Ascending aorta (tissue), 2 donors: ENCODE measurements at regions of chr2 and their contacts with region 1.

Region 1: GRCh38 chr2:162301151-162301804 is 17.2 kb downstream of the IFIH1 start:
- DNase-seq: no peak
- H3K4me3 ChIP-seq: no peak overlapping the region
- H3K27ac ChIP-seq: no peak overlapping the region
- H3K4me1 ChIP-seq: no peaks in the 10 kb centered on the region
- H3K27me3 ChIP-seq: no peaks in the 10 kb centered on the region
- CTCF ChIP-seq: peak; percentile 54 to 92 (median 86)

Region 2: DNA sequence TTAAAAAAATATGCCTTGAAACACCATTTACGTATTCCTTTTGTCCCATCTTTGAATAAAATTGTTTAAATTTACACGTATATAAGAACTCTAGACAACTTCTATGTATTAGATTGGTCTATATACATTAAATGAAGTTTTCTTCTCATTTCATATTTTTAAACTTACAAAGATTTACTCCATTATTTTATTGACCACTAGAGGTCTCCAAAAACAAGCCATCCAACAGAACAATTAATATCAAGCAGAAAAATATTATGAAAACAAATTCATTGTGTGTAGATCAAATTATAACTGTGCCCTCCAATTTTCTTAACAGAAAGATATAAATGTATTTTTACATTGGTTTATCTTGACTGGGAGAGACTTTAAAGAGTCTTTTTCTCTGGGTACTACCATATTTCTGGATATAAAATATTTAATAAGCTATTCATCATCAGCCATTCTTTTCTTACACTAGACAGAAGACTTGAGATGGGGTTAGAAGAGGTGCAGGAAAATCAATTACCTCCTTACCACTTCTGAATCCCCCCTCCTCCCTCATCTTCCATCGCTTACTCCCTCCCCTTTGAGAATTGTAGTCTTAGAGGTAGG is 293.7 kb before region 1 on chr2:
- intact Hi-C with region 1: loop called (anchors 10 kb)
- DNase-seq: no peak
- H3K4me3 ChIP-seq: no peak overlapping the region
- H3K27ac ChIP-seq: no peak overlapping the region
- H3K4me1 ChIP-seq: no peaks in the 10 kb centered on the region
- H3K27me3 ChIP-seq: no peaks in the 10 kb centered on the region
- CTCF ChIP-seq: peak; percentile 25 to 60 (median 43)

Region 3: GRCh38 chr2:162126111-162126519 is 175.2 kb before region 1 on chr2:
- intact Hi-C with region 1: no loop called
- DNase-seq: no peak
- H3K4me3 ChIP-seq: no peak overlapping the region
- H3K27ac ChIP-seq: no peak overlapping the region
- H3K4me1 ChIP-seq: no peaks in the 10 kb centered on the region
- H3K27me3 ChIP-seq: no peaks in the 10 kb centered on the region
- CTCF ChIP-seq: no peak

Region 4: DNA sequence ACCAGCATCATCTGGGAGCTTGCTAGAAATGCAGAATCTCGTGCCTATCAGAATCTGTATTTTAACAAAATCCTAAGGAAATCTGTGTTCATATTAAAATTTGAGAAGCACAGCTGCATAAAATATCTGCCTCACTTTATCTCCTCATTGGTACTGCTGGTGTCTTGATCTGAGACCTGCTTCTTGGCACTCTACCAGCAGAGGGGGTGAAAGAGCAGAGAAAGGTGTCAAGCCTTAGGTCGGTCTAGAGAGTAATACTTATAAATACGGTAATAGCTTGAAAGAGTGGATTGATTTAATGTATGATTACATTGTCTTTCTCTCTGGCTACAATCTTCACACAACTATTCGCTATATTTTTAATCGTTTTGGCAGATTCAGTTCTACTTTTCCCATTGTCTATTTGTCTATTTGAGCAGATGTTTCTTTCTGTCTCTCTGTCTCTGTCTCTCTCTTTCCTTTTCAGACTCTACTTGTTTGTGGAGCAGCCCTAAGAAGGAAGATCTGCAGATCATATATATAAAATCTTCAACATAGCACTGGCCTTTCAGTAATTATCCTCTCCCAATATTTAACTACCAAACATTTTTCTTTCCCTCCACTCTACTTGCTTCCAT is 147.6 kb before region 1 on chr2:
- intact Hi-C with region 1: loop called (anchors 5 kb)
- DNase-seq: no peak
- H3K4me3 ChIP-seq: no peak overlapping the region
- H3K27ac ChIP-seq: no peak overlapping the region
- H3K4me1 ChIP-seq: no peaks in the 10 kb centered on the region
- H3K27me3 ChIP-seq: no peaks in the 10 kb centered on the region
- CTCF ChIP-seq: peak in 1 of 3 experiments; percentile 20

Region 5: DNA sequence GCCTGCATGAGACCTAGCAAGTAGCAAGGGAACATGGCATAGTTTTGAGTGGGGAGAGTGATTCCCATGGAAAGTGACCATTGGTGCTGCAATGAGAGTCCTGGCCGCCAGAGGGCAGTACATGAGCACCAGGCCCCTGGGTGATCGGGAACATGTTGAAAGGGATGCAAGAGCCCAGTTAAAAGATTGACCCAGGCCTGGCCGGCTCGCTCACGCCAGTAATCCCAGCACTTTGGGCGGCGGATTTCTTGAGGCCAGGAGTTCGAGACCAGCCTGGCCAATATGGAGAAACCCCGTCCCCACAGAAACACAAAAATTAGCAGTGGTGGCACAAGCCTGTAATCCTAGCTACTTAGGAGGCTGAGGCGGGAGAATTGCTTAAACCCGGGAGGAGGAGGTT is 80.2 kb before region 1 on chr2:
- intact Hi-C with region 1: loop called (anchors 1 kb)
- DNase-seq: peak; percentile 28 to 88
- H3K4me3 ChIP-seq: no peak overlapping the region
- H3K27ac ChIP-seq: no peak overlapping the region
- H3K4me1 ChIP-seq: no peaks in the 10 kb centered on the region
- H3K27me3 ChIP-seq: no peaks in the 10 kb centered on the region
- CTCF ChIP-seq: peak; percentile 74 to 88 (median 85)

Region 6: DNA sequence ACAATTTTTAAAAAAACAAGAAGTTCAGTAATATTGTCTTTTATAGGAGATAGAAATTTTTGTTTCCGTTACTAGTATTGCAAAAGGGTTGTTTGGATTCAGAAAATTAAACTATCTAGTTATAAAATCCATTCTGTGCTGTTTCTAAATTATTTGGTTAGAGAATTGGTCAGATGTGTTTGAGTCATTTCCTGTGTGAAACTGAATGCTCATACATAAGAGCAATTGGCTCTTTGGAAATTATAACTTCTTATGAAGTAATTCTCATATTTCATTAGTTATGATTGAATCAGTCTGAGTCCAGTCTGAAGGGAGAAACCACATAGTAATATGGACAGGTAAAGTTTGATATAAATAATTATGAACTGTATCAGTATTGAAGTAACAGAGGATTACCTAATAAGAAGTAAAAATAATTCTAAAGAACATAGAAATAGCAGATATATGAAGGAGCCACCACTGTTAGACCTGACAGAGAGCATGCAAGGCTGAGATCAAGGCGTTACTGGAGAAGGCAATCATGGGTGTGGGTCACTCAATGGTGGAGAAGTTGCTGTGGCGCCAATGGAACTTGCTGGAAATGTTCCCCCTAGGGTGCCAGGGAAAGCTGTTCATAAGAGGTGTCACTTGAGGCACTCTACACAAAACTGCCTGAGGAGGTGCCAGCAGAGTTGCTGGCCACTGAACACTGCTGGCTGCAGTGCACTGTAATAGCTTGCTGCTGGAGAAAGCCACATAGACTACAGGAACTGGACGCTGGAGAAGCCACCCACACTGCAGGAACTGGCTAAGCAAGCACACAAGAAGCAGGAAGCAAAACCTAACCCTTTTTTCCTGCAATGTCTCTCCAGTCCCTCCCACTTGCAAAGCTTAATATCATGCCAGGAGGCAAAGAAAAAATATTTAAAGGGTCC is 40.0 kb before region 1 on chr2:
- intact Hi-C with region 1: loop called (anchors 5 kb)
- DNase-seq: peak; percentile 39 to 75
- H3K4me3 ChIP-seq: no peak overlapping the region
- H3K27ac ChIP-seq: peak overlapping the region; percentile 62 to 63
- H3K4me1 ChIP-seq: peaks cover 0 to 8% of the 10 kb centered on the region in 2 donors
- H3K27me3 ChIP-seq: no peaks in the 10 kb centered on the region
- CTCF ChIP-seq: no peak